ENCODE measurements at regions of chr12 and their contacts with region 1.

Region 1: GRCh38 chr12:56987551-56988053 is 18.7 kb downstream of the ZBTB39 start:
- DNase-seq: peak; percentile 79
- ATAC-seq: peak; percentile 80
- H3K4me3 ChIP-seq: no peak overlapping the region
- H3K4me3 Mint-ChIP-seq: peak overlapping the region; percentile 52
- H3K27ac ChIP-seq: no peak overlapping the region
- H3K27ac Mint-ChIP-seq: no peak overlapping the region
- H3K4me1 ChIP-seq: peaks cover 0 to 8% of the 10 kb centered on the region in 2 donors
- H3K4me1 Mint-ChIP-seq: peaks cover 4% of the 10 kb centered on the region
- H3K27me3 ChIP-seq: peaks cover 0 to 8% (median 2%) of the 10 kb centered on the region in 4 experiments
- H3K27me3 Mint-ChIP-seq: no peaks in the 10 kb centered on the region
- CTCF ChIP-seq: peak; percentile 97

Region 2: DNA sequence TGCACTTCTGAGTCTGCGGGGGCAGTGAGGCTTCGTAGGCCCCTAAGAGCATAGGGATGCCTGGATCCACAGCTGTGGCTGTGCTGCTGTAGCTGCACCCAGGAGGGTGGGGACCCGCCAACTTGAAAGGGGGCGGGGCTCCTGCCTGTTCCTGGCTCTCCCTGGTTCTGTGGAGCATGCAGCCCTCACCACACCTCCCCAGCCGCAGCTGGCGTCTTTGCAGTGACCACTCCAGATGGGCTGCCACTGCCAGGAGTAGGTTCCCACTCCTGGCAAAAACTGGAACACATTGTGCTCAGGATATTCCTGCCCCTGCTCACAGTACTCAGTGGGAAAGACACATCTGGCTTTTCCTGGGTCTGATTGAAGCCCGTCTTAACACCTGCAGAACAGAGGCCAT is 574.2 kb before region 1 on chr12:
- CTCF ChIA-PET with region 1: no interaction called
- POLR2A ChIA-PET with region 1: no interaction called
- intact Hi-C with region 1: no loop called
- DNase-seq: no peak
- ATAC-seq: no peak
- H3K4me3 ChIP-seq: no peak overlapping the region
- H3K4me3 Mint-ChIP-seq: no peak overlapping the region
- H3K27ac ChIP-seq: no peak overlapping the region
- H3K27ac Mint-ChIP-seq: no peak overlapping the region
- H3K4me1 ChIP-seq: no peaks in the 10 kb centered on the region
- H3K4me1 Mint-ChIP-seq: no peaks in the 10 kb centered on the region
- H3K27me3 ChIP-seq: no peaks in the 10 kb centered on the region
- H3K27me3 Mint-ChIP-seq: no peaks in the 10 kb centered on the region
- CTCF ChIP-seq: no peak

Region 3: GRCh38 chr12:56476972-56477432 is 510.6 kb before region 1 on chr12:
- CTCF ChIA-PET with region 1: no interaction called
- POLR2A ChIA-PET with region 1: no interaction called
- intact Hi-C with region 1: no loop called
- DNase-seq: no peak
- ATAC-seq: no peak
- H3K4me3 ChIP-seq: no peak overlapping the region
- H3K4me3 Mint-ChIP-seq: no peak overlapping the region
- H3K27ac ChIP-seq: no peak overlapping the region
- H3K27ac Mint-ChIP-seq: no peak overlapping the region
- H3K4me1 ChIP-seq: no peaks in the 10 kb centered on the region
- H3K4me1 Mint-ChIP-seq: peaks cover 5% of the 10 kb centered on the region
- H3K27me3 ChIP-seq: no peaks in the 10 kb centered on the region
- H3K27me3 Mint-ChIP-seq: no peaks in the 10 kb centered on the region
- CTCF ChIP-seq: no peak

Region 4: DNA sequence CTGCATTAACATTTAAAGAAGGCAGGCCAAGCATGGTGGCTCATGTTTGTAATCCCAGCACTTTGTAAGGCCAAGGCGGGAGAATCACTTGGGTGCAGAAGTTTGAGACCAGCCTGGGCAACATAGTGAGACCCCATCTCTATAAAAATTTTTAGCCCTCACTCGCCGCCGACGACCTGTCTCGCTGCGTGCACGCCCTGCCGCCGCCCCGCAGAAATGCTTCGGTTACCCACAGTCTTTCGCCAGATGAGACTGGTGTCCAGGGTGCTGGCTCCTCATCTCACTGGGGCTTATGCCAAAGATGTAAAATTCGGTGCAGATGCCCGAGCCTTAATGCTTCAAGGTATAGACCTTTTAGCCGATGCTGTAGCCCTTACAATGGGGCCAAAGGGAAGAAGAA is 476.8 kb before region 1 on chr12:
- CTCF ChIA-PET with region 1: interaction called, 4 read pairs
- POLR2A ChIA-PET with region 1: no interaction called
- intact Hi-C with region 1: loop called (anchors 5 kb)
- DNase-seq: no peak
- ATAC-seq: no peak
- H3K4me3 ChIP-seq: no peak overlapping the region
- H3K4me3 Mint-ChIP-seq: no peak overlapping the region
- H3K27ac ChIP-seq: no peak overlapping the region
- H3K27ac Mint-ChIP-seq: no peak overlapping the region
- H3K4me1 ChIP-seq: peaks cover 0 to 2% of the 10 kb centered on the region in 2 donors
- H3K4me1 Mint-ChIP-seq: peaks cover 2% of the 10 kb centered on the region
- H3K27me3 ChIP-seq: no peaks in the 10 kb centered on the region
- H3K27me3 Mint-ChIP-seq: peaks cover 13% of the 10 kb centered on the region
- CTCF ChIP-seq: no peak

Region 5: DNA sequence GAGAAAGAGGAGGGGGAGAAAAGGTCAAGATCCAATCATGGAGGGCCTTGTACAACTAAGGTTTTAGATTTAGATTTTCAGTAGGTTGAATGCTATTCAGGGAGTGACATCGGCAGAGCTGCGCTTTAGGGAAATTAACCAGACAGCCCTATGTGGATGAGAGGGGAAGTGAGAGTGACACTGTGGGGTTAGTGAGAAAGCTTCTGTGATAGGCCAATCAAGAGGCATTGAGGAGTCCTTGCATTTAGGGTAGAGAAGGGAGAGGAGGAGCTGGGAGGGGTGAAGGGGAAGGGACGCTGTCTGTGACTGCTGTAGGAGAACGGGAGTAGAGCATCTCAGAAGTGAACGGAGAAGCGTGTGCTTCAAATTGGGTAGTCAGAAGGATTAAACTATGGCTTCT is 221.1 kb before region 1 on chr12:
- CTCF ChIA-PET with region 1: interaction called, 152 read pairs
- POLR2A ChIA-PET with region 1: no interaction called
- intact Hi-C with region 1: no loop called
- DNase-seq: peak; percentile 78
- ATAC-seq: peak; percentile 99
- H3K4me3 ChIP-seq: no peak overlapping the region
- H3K4me3 Mint-ChIP-seq: peak overlapping the region; percentile 14
- H3K27ac ChIP-seq: no peak overlapping the region
- H3K27ac Mint-ChIP-seq: peak overlapping the region; percentile 23
- H3K4me1 ChIP-seq: peaks cover 11 to 15% of the 10 kb centered on the region in 2 donors
- H3K4me1 Mint-ChIP-seq: peaks cover 12% of the 10 kb centered on the region
- H3K27me3 ChIP-seq: no peaks in the 10 kb centered on the region
- H3K27me3 Mint-ChIP-seq: no peaks in the 10 kb centered on the region
- CTCF ChIP-seq: no peak

Region 6: GRCh38 chr12:56947633-56948456 is 39.8 kb before region 1 on chr12:
- CTCF ChIA-PET with region 1: no interaction called
- POLR2A ChIA-PET with region 1: no interaction called
- intact Hi-C with region 1: no loop called
- DNase-seq: no peak
- ATAC-seq: no peak
- H3K4me3 ChIP-seq: no peak overlapping the region
- H3K4me3 Mint-ChIP-seq: no peak overlapping the region
- H3K27ac ChIP-seq: no peak overlapping the region
- H3K27ac Mint-ChIP-seq: no peak overlapping the region
- H3K4me1 ChIP-seq: no peaks in the 10 kb centered on the region
- H3K4me1 Mint-ChIP-seq: no peaks in the 10 kb centered on the region
- H3K27me3 ChIP-seq: peaks cover 0 to 3% (median 0%) of the 10 kb centered on the region in 4 experiments
- H3K27me3 Mint-ChIP-seq: peaks cover 26% of the 10 kb centered on the region
- CTCF ChIP-seq: no peak

Region 7: GRCh38 chr12:57005980-57006808 is 18.6 kb after region 1 on chr12 and contains the start of gene ZBTB39:
- CTCF ChIA-PET with region 1: interaction called, 52 read pairs
- POLR2A ChIA-PET with region 1: no interaction called
- intact Hi-C with region 1: no loop called
- DNase-seq: peak; percentile 84
- ATAC-seq: peak; percentile 92
- H3K4me3 ChIP-seq: peak within 1 kb of the TSS; percentile 39 to 87 (median 70)
- H3K4me3 Mint-ChIP-seq: peak within 1 kb of the TSS; percentile 91
- H3K27ac ChIP-seq: peak within 1 kb of the TSS; percentile 43 to 86
- H3K27ac Mint-ChIP-seq: peak within 1 kb of the TSS; percentile 93
- H3K4me1 ChIP-seq: peaks cover 16 to 21% of the 10 kb centered on the region in 2 donors
- H3K4me1 Mint-ChIP-seq: peaks cover 41% of the 10 kb centered on the region
- H3K27me3 ChIP-seq: no peaks in the 10 kb centered on the region
- H3K27me3 Mint-ChIP-seq: no peaks in the 10 kb centered on the region
- CTCF ChIP-seq: peak; percentile 61
- total RNA-seq, gene ZBTB39: 13.9 and 15.6 TPM in 2 replicates

Region 8: DNA sequence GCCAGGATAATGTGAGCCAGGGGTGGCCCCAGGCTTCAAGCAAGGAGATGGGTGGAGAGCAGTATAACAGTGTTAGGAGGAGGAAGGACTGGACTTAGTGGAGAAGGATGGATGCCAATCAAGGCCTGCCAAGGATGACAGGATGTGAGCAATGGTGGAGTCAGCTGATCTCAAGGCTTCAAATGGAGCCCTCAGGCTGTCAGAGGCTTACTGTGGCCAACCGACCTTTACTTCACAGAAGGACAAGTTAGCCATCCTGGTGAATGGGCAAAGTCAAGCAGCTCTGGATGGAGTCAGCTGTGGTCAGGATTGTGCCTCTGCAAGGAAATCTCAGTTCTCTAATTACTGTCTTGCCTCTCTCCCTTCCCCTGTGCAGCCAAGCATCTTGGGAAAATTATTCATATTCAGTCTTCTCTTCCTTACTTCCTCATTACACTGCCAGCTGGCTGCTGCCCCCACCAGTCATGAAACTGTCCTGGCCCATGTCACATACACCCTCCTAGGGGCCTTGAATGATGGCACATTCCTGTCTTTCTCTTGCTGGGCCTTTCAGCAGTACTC is 131.2 kb after region 1 on chr12:
- CTCF ChIA-PET with region 1: interaction called, 14 read pairs
- POLR2A ChIA-PET with region 1: no interaction called
- intact Hi-C with region 1: no loop called
- DNase-seq: peak; percentile 54
- ATAC-seq: no peak
- H3K4me3 ChIP-seq: no peak overlapping the region
- H3K4me3 Mint-ChIP-seq: no peak overlapping the region
- H3K27ac ChIP-seq: peak overlapping the region in 1 of 2 donors; percentile 21
- H3K27ac Mint-ChIP-seq: no peak overlapping the region
- H3K4me1 ChIP-seq: peaks cover 12% of the 10 kb centered on the region in 2 donors
- H3K4me1 Mint-ChIP-seq: peaks cover 5% of the 10 kb centered on the region
- H3K27me3 ChIP-seq: no peaks in the 10 kb centered on the region
- H3K27me3 Mint-ChIP-seq: no peaks in the 10 kb centered on the region
- CTCF ChIP-seq: no peak

Region 9: DNA sequence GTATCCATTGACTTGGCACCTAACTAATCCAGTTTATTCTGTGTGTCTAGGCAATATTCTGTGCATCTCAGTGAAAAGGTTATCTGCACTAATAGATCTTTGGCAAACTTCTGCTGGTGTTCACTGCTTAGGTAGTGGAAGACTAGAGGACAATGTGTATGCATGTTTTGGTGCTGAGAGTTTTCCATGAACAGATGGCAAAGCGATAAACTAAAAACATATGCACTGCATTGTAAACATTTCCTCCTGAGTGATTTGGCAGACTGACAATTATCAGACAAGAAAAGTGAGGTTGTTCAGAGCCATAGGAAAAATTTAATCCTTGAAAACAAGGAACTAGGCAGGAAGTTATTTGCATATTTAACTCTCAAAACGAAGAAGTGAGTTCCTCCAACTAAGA is 1354.2 kb after region 1 on chr12:
- CTCF ChIA-PET with region 1: no interaction called
- POLR2A ChIA-PET with region 1: no interaction called
- intact Hi-C with region 1: no loop called
- DNase-seq: no peak
- ATAC-seq: no peak
- H3K4me3 ChIP-seq: no peak overlapping the region
- H3K4me3 Mint-ChIP-seq: no peak overlapping the region
- H3K27ac ChIP-seq: no peak overlapping the region
- H3K27ac Mint-ChIP-seq: no peak overlapping the region
- H3K4me1 ChIP-seq: peaks cover 0 to 3% of the 10 kb centered on the region in 2 donors
- H3K4me1 Mint-ChIP-seq: peaks cover 3% of the 10 kb centered on the region
- H3K27me3 ChIP-seq: no peaks in the 10 kb centered on the region
- H3K27me3 Mint-ChIP-seq: peaks cover 8% of the 10 kb centered on the region
- CTCF ChIP-seq: no peak

Measured in B cell (primary cell).